Activated B cell treated with CpG ODN at 0.5 μM for 24 hours (primary cell): ENCODE measurements at regions of chr2 and their contacts with region 1.

Region 1: GRCh38 chr2:39124000-39124745 is 3.3 kb upstream of the SOS1 start:
- DNase-seq: peak; percentile 93
- ATAC-seq: peak; percentile 67
- H3K4me3 Mint-ChIP-seq: peak overlapping the region; percentile 90
- H3K27ac Mint-ChIP-seq: peak overlapping the region; percentile 92
- H3K4me1 Mint-ChIP-seq: peaks cover 56% of the 10 kb centered on the region
- H3K27me3 Mint-ChIP-seq: no peaks in the 10 kb centered on the region
- CTCF ChIP-seq: no peak

Region 2: GRCh38 chr2:38602732-38603401 is 521.3 kb before region 1 on chr2 and contains the start of gene HNRNPLL:
- CTCF ChIA-PET with region 1: no interaction called
- POLR2A ChIA-PET with region 1: no interaction called
- intact Hi-C with region 1: loop called (anchors 10 kb)
- DNase-seq: peak; percentile 84
- ATAC-seq: peak; percentile 87
- H3K4me3 Mint-ChIP-seq: peak within 1 kb of the TSS; percentile 89
- H3K27ac Mint-ChIP-seq: peak within 1 kb of the TSS; percentile 65
- H3K4me1 Mint-ChIP-seq: peaks cover 20% of the 10 kb centered on the region
- H3K27me3 Mint-ChIP-seq: peaks cover 38% of the 10 kb centered on the region
- CTCF ChIP-seq: no peak
- total RNA-seq, gene HNRNPLL: 8.6 and 8.8 TPM in 2 replicates

Region 3: DNA sequence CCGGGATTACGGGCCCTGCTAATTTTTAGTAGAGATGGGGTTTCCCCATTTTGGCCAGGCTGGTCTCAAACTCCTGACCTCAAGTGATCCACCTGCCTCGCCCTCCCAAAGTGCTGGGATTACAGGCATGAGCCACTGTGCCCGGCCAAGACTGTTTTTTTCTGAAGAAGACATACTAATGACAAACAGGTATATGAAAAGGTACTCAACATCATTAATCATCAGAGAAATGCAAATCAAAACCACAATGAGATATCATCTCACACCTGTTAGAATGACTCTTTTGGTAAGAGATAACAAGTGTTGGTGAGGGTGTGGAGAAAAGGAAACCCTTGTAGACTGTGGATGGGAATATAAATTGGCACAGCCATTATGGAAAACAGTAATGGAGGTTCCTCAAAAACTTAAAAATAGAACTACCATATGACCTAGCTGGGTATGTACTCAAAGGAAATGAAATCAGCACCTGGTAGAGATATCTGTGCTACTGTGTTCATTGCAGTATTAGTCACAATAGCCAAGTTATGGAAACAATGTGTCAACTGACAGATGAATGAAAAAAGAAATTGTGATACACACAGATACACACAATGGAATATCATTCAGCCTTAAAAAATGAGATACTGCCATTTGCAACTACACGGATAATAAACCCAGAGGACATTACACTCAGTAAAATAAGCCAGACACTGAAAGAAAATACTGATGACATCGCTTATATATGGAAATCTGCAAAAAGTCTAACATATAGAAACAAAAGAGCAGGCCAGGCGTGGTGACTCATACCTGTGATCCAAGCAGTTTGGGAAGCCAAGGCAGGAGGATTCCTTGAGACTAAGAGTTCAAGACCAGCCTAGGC is 24.1 kb before region 1 on chr2:
- CTCF ChIA-PET with region 1: no interaction called
- POLR2A ChIA-PET with region 1: interaction called, 8 read pairs
- intact Hi-C with region 1: loop called (anchors 2 kb)
- DNase-seq: no peak
- ATAC-seq: peak; percentile 40
- H3K4me3 Mint-ChIP-seq: peak overlapping the region; percentile 52
- H3K27ac Mint-ChIP-seq: peak overlapping the region; percentile 36
- H3K4me1 Mint-ChIP-seq: peaks cover 65% of the 10 kb centered on the region
- H3K27me3 Mint-ChIP-seq: no peaks in the 10 kb centered on the region
- CTCF ChIP-seq: no peak

Region 4: DNA sequence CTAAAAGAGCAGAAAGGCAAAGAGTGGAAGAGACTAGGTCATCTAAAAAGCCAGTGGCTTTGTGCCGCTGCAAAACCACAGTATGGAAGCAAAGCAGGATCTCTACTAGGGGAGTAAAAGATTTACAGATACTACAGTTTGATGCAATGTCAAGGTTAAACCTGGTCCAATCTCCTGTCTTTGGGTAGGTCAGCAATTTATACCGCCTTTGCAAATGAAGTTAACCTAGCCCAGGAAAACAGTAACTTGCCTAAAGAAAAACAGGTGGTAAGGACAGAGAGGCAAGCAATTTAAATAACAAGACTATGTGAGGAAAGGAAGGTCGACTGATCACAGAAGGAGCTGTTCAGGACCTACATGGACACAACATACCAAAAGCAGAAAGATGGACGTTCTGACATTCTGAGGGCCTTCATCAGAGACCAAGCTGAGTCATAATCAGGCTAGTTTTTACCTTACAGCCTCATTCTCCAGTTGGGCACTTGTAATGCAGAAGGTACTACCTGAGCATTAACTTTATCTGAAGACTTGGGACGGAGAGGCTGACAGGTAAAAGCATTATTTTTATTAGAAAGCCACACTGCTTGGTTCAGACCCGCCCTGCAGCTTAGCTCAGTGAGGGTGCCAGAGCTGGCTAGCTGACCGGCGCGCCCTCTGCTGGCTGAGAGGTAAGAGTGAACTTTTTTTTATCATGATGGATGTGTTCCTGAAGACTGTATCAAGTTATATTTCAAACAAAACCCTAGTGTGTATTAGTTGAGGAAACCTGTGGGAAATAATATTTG is 103.6 kb after region 1 on chr2:
- CTCF ChIA-PET with region 1: interaction called, 159 read pairs
- POLR2A ChIA-PET with region 1: interaction called, 44 read pairs
- intact Hi-C with region 1: loop called (anchors 1 kb)
- DNase-seq: peak; percentile 69
- ATAC-seq: peak; percentile 87
- H3K4me3 Mint-ChIP-seq: peak overlapping the region; percentile 73
- H3K27ac Mint-ChIP-seq: no peak overlapping the region
- H3K4me1 Mint-ChIP-seq: peaks cover 15% of the 10 kb centered on the region
- H3K27me3 Mint-ChIP-seq: no peaks in the 10 kb centered on the region
- CTCF ChIP-seq: peak; percentile 86

Region 5: DNA sequence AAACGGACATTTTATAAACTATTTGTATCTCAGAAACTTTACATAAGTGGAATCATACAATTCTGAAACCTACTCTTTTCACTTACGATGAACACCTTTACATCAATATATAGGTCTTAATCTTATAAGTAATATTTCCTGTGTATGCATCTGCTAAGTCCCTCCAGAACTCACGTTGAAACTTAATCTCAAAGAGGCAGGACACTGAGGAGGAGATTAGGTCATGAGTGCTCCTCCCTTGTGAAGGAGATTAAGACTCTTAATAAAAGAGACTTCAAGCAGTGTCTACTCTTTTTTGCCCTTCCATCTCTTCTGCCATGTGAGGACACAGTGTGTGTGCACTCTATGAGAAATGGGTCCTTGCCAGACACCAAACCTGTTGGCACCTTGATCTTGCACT is 214.3 kb after region 1 on chr2:
- CTCF ChIA-PET with region 1: no interaction called
- POLR2A ChIA-PET with region 1: no interaction called
- intact Hi-C with region 1: no loop called
- DNase-seq: no peak
- ATAC-seq: no peak
- H3K4me3 Mint-ChIP-seq: no peak overlapping the region
- H3K27ac Mint-ChIP-seq: no peak overlapping the region
- H3K4me1 Mint-ChIP-seq: no peaks in the 10 kb centered on the region
- H3K27me3 Mint-ChIP-seq: no peaks in the 10 kb centered on the region
- CTCF ChIP-seq: no peak

Region 6: DNA sequence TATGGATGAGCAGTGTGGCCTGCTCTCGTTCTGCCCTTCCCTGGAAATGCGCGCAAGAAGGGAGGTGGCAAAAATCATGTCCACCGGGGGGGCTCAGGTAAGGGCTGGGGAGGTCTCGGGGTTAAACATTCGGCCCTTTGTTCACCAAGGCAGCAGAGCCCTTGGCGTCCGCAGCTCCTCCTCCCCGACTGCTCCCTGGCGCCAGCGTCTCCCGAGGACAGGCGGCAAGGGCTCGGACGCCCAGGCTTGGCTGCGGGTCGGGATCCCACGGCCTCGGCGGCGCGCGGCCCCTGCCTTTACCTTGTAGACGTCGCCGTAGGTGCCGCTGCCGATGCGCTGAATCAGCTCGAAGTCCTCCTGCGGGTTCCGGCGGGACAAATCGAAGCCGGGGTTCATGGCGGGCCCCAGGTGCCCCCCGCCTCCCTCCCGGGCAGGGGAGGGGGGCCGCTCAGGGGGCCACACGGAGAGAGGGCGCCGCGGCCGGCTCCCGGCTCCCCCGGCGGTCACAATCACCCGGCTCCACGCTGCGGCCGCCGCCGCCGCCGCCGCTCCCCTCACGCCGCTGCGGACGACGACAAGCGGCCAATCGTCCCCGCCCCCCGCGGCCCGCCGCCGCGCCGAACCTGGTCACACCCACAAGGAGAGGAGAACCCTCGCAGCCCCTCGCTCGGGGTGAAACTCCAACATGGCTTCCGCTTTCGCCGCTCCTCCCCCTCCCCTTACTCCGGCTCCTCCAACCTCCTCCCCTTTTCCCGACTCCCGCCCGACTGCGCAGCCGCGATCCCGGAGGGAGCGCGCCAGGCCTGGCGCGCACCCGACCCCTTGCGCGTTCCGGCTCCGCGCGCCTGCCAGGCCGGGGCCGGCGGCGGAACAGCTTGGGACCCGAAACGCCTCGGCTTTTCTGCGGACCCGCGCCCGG is 312.7 kb after region 1 on chr2 and contains the start of gene MAP4K3:
- CTCF ChIA-PET with region 1: no interaction called
- POLR2A ChIA-PET with region 1: interaction called, 3 read pairs
- intact Hi-C with region 1: loop called (anchors 5 kb)
- DNase-seq: peak; percentile 74
- ATAC-seq: peak; percentile 82
- H3K4me3 Mint-ChIP-seq: peak within 1 kb of the TSS; percentile 89
- H3K27ac Mint-ChIP-seq: peak within 1 kb of the TSS; percentile 74
- H3K4me1 Mint-ChIP-seq: peaks cover 20% of the 10 kb centered on the region
- H3K27me3 Mint-ChIP-seq: no peaks in the 10 kb centered on the region
- CTCF ChIP-seq: no peak
- total RNA-seq, gene MAP4K3: 9.9 and 11.0 TPM in 2 replicates